Tibial artery (tissue), 4 donors: ENCODE measurements at regions of chr11 and their contacts with region 1.

Region 1: GRCh38 chr11:124586238-124586860 is 16.6 kb downstream of the OR8A1 start:
- DNase-seq: peak in 1 of 2 donors; percentile 36
- H3K4me3 ChIP-seq: no peak overlapping the region
- H3K27ac ChIP-seq: no peak overlapping the region
- H3K4me1 ChIP-seq: no peaks in the 10 kb centered on the region
- H3K27me3 ChIP-seq: peaks cover 0 to 3% of the 10 kb centered on the region in 2 donors
- CTCF ChIP-seq: peak; percentile 27 to 40

Region 2: DNA sequence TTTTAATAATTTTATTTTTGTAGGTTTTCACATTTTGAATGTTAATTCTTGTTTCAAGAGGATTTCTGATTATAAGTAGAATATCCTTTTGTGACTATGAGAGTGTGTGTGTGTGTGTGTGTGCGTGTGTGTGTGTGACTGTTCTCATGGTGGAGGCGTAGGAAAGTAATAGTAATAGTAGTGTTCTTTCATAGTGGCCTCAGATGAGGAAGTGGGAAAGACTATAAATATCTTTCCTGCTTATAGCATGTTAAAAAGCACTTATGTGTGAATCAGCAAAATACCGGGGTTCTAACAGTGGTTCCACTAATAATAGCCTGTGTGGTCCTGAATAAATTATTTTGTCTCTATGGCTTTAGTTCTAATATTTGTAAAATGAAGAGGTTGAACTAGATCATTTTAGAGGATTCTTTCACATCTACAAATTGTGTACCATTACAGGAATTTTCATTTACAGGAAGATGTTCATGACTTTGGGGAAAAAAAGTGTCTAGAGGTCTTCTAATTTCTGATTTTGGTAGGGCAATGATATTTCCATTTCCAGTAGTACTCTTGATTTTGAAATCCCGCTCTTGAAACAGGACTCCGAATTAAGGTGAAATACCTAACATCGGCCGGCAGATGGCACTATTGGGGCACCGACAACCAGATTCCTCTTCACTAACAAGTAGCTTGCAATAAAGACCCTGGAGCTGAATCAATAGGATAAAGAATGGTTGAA is 515.3 kb before region 1 on chr11:
- intact Hi-C with region 1: loop called (anchors 10 kb)
- DNase-seq: peak; percentile 50 to 80
- H3K4me3 ChIP-seq: no peak overlapping the region
- H3K27ac ChIP-seq: no peak overlapping the region
- H3K4me1 ChIP-seq: peaks cover 0 to 17% (median 5%) of the 10 kb centered on the region in 4 donors
- H3K27me3 ChIP-seq: peaks cover 0 to 23% of the 10 kb centered on the region in 2 donors
- CTCF ChIP-seq: peak; percentile 70 to 74